K562 (cell line): ENCODE measurements at regions of chr2 and their contacts with region 1.

Region 1: DNA sequence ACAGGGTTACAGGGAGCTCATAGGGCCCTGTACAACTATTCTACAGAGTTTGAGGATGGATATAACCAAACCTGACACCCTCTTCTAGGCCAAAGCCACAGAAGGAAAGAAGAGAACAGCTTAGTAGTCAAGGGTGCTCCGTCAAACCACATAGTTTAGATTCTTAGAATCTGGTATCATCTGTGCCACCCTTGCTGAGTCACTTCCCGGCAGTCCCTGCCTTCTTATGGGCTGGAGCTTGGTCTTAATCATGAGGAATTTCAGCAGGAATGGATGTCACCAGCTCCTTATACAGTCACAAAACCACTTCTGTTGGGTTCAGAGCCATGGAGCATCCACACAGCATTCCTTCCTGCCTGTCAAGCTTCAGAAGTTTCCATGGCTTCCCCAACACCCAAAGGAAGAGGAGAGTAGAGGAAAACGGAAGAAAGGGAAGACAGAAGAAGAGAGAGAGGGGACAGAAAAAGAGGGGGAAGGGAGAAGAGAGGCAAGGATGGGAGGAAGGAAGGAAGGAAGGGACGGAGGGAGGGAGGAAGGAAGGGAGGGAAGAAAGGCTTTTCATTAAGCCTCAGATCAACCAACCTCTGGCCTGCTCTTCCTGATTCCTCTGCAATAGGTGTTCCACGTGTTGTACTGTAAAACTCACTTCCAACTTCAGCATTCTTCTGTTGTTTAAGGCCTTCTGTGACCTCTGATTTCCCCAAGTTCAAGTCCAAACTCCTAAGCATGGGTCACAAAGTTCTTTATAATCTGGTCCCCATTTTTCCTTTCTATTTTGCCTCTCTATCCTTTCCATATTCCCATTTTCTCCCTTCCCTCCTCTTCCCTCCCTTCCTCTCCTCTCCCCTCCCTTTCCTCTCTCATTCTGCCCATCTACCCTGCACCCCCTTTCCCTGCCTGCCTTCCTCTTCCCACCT is 246.1 kb upstream of the TNP1 start:
- DNase-seq: peak; percentile 15 to 73 (median 34)
- ATAC-seq: peak; percentile 31
- H3K4me3 ChIP-seq: no peak overlapping the region
- H3K27ac ChIP-seq: peak overlapping the region; percentile 83
- H3K4me1 ChIP-seq: peaks cover 21 to 60% of the 10 kb centered on the region in 2 experiments
- H3K27me3 ChIP-seq: no peaks in the 10 kb centered on the region
- CTCF ChIP-seq: no peak
- EP300 ChIP-seq: peak; percentile 45; the same call in 1 of the 2 replicates
- POLR2A ChIP-seq: no peak
- RAD21 ChIP-seq: no peak

Region 2: DNA sequence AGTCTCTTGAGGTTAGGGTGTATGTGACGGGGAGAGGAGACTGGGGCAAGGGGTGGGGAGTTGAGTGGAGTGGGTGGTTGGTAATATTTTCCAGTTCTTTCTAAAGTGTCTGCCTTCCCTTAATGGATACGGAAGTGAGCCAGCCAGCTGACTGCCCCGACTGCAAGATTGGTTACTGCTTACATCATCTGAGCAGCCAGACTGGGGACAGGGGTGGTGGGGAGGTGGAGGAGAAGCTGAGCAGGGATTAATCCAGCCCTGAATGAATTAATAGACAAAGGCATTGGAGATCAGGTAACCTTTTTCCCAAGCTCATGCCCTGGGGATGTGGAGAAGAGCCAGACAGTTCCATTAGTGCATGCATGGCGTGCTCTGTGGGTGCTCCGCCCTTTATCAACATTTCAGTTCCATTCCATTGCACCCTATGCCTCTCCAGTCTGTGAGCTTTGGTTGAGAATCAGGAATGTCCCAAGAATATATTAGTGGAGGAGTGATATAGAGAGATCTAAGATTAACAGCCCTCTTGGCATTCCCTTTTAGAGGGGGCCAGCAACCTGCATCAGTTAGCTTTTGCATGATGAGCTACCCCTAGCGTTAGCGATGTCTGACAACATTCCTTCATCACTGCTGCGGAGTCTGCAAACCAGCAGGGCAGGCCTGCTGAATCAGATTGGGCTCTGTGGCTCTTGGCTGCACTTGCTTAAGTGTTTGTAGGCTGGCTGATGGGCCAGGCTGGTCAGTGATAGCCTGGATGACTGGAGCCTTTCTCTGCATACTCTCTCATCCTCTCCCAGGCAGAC is 313.6 kb before region 1 on chr2:
- CTCF ChIA-PET with region 1: no interaction called
- POLR2A ChIA-PET with region 1: no interaction called
- in situ Hi-C with region 1: loop called (anchors 10 kb)
- intact Hi-C with region 1: no loop called
- DNase-seq: peak in 1 of 4 experiments; percentile 42
- ATAC-seq: peak; percentile 90
- H3K4me3 ChIP-seq: no peak overlapping the region
- H3K27ac ChIP-seq: no peak overlapping the region; the same call in 2 of the 3 replicates
- H3K4me1 ChIP-seq: peaks cover 0 to 24% of the 10 kb centered on the region in 2 experiments; a peak in 4 of 5 replicates
- H3K27me3 ChIP-seq: no peaks in the 10 kb centered on the region
- CTCF ChIP-seq: peak in 2 of 3 experiments; percentile 8 to 29; a peak in 2 of 6 replicates
- EP300 ChIP-seq: peak; percentile 41; the same call in 1 of the 2 replicates
- POLR2A ChIP-seq: no peak
- RAD21 ChIP-seq: peak in 1 of 2 experiments; percentile 22; a peak in 2 of 4 replicates

Region 3: GRCh38 chr2:217064234-217065024 is 41.6 kb before region 1 on chr2:
- CTCF ChIA-PET with region 1: no interaction called
- POLR2A ChIA-PET with region 1: no interaction called
- in situ Hi-C with region 1: no loop called
- intact Hi-C with region 1: loop called (anchors 5 kb)
- DNase-seq: no peak
- ATAC-seq: no peak
- H3K4me3 ChIP-seq: no peak overlapping the region
- H3K27ac ChIP-seq: no peak overlapping the region
- H3K4me1 ChIP-seq: peaks cover 0 to 19% of the 10 kb centered on the region in 2 experiments; a peak in 2 of 5 replicates
- H3K27me3 ChIP-seq: no peaks in the 10 kb centered on the region
- CTCF ChIP-seq: no peak
- EP300 ChIP-seq: no peak
- POLR2A ChIP-seq: no peak
- RAD21 ChIP-seq: no peak

Region 4: GRCh38 chr2:217090024-217090473 is 15.9 kb before region 1 on chr2:
- CTCF ChIA-PET with region 1: no interaction called
- POLR2A ChIA-PET with region 1: no interaction called
- in situ Hi-C with region 1: no loop called
- intact Hi-C with region 1: loop called (anchors 1 kb)
- DNase-seq: peak; percentile 42 to 72 (median 58)
- ATAC-seq: peak; percentile 72
- H3K4me3 ChIP-seq: no peak overlapping the region
- H3K27ac ChIP-seq: peak overlapping the region; percentile 77
- H3K4me1 ChIP-seq: peaks cover 15 to 52% of the 10 kb centered on the region in 2 experiments
- H3K27me3 ChIP-seq: no peaks in the 10 kb centered on the region
- CTCF ChIP-seq: no peak
- EP300 ChIP-seq: peak; percentile 73; the same call in 1 of the 2 replicates
- POLR2A ChIP-seq: no peak
- RAD21 ChIP-seq: 0 out of 4 replicates have a peak, but pooled peaks of 1 of the 2 experiments have one; percentile 6

Region 5: DNA sequence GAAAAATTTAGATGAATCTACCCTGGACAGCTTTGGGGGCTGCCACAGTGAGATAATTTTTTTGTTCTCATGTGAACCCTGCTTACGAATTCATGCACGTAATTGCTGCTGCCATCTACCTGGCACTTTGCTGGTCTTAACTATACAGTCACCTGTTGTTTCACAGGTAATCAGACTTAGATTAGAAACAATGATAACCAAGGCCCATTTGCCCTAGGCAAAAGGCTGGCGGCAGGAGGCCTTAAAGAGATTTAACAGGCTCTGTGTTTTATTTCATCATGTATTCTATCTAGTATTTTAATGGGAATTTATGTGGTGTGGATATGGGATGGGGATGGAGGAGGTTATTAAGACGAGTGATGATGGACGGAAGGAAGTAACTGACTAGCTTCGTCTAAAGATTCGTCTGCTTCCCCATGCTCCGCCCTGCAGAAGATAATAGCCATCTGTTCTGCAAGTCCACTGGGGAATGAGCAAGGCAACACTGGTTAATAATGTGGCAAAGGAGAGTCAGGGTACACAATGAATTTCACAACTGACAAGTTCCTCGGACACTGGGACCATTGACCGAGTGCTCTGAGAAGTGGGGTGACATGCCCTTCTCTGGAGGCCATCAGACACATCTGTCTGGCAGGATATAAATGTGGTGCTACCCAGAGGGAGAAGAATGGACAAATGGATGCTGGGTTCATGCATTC is 45.7 kb after region 1 on chr2:
- CTCF ChIA-PET with region 1: no interaction called
- POLR2A ChIA-PET with region 1: no interaction called
- in situ Hi-C with region 1: no loop called
- intact Hi-C with region 1: loop called (anchors 5 kb)
- DNase-seq: no peak
- ATAC-seq: no peak
- H3K4me3 ChIP-seq: no peak overlapping the region
- H3K27ac ChIP-seq: no peak overlapping the region
- H3K4me1 ChIP-seq: peaks cover 3 to 44% of the 10 kb centered on the region in 2 experiments; a peak in 3 of 5 replicates
- H3K27me3 ChIP-seq: no peaks in the 10 kb centered on the region
- CTCF ChIP-seq: no peak
- EP300 ChIP-seq: no peak
- POLR2A ChIP-seq: no peak
- RAD21 ChIP-seq: no peak